ENCODE measurements at regions of chr5 and their contacts with region 1.

Region 1: DNA sequence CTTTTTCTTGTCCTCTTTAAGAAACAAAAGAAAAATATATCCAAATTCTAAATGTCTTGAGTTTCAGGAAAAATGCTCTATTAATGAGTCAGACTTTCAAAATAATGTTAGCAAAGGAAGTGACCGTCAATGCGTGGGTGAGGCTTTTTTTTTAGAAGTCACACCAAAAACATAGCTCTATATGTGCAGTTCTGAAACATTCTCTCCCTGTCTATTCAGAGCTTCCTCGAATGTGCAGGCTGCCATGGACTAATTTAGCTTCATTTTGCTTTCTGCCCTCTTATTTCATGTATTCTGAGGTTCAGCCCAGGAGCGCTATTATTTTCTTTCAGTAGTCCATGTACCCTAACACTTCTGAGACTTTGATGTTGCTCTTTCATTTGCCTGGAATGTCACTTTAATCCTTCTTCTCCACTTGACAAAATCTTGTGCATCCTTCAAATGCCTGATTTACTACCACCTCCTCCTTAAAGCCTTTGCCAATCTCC is 72.5 kb upstream of the RASA1 start:
- DNase-seq: peak; percentile 40
- ATAC-seq: peak; percentile 69
- H3K4me3 Mint-ChIP-seq: no peak overlapping the region
- H3K27ac Mint-ChIP-seq: peak overlapping the region; percentile 34
- H3K4me1 Mint-ChIP-seq: peaks cover 23% of the 10 kb centered on the region
- H3K27me3 Mint-ChIP-seq: no peaks in the 10 kb centered on the region

Region 2: DNA sequence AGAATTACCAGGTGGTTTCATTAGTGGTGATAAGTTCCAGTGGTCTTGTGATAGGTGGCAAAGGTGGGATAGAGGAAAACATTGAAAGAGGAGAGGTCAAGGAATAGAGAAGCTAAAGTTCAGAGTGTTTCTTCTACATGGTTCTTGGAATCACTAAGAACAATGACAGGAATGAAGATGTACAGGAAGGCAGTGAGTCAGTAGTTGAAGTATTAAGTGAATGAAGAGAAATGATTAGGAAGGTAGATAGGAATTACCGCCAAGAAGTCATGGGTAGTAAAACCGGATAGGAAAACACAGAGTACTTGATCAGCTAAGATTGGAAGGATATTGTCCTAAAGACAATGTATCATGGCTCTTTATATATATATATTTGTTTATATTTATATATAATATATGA is 34.6 kb after region 1 on chr5:
- CTCF ChIA-PET with region 1: no interaction called
- POLR2A ChIA-PET with region 1: no interaction called
- intact Hi-C with region 1: loop called in 1 of 2 experiments (anchors 2 kb)
- DNase-seq: no peak
- ATAC-seq: no peak
- H3K4me3 Mint-ChIP-seq: no peak overlapping the region
- H3K27ac Mint-ChIP-seq: no peak overlapping the region
- H3K4me1 Mint-ChIP-seq: peaks cover 11% of the 10 kb centered on the region
- H3K27me3 Mint-ChIP-seq: no peaks in the 10 kb centered on the region

Region 3: DNA sequence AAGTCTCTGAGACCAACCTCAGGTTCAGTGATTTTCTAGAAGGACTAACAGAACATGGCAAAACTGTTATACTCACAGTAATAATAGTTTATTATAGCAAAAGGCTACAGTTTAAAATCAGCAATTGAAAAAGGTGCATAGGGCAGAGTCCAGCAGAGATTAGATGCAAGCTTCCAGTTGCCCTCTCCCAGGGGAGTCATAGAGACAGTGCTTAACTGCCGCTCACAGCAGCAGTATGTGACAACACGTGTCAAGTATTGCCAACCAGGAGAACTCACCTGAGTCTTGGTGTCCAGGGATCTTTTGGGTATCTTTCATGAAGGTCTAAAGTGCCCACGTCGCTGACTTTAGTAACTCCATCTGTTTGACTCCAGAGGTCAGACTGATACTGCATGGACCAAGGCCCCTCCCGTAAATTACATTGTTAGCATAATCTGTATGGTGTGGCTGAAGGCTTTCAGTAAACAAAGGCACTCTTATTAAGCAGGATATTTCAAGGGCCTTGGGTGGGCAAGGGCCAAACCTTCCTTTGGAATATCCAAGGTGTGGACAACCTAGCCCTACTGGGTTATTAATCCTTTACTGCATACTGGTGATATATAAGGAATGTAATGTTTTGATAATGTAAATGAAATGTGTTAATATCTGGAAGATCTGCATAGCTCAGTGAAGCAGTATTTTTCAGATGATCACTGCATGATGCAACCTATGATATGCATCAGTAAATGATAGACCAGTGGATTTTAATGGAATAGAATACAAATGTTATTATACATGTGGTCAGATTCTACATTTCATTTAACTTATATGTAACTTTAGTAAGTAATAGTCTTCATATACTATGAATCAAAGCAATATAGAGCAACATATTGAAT is 116.5 kb after region 1 on chr5:
- CTCF ChIA-PET with region 1: no interaction called
- POLR2A ChIA-PET with region 1: no interaction called
- intact Hi-C with region 1: no loop called
- DNase-seq: no peak
- ATAC-seq: no peak
- H3K4me3 Mint-ChIP-seq: no peak overlapping the region
- H3K27ac Mint-ChIP-seq: no peak overlapping the region
- H3K4me1 Mint-ChIP-seq: peaks cover 56% of the 10 kb centered on the region
- H3K27me3 Mint-ChIP-seq: no peaks in the 10 kb centered on the region

Measured in activated CD4-positive, alpha-beta T cell treated with anti-CD3 and anti-CD28 coated beads for 36 hours (primary cell).